ENCODE measurements at regions of chr6 and their contacts with region 1.

Region 1: GRCh38 chr6:110179401-110180227 is at the start of gene WASF1:
- DNase-seq: peak; percentile 86
- H3K4me3 Mint-ChIP-seq: peak within 1 kb of the TSS; percentile 79
- H3K27ac Mint-ChIP-seq: peak within 1 kb of the TSS; percentile 35
- H3K4me1 Mint-ChIP-seq: peaks cover 10% of the 10 kb centered on the region
- H3K27me3 Mint-ChIP-seq: peaks cover 15% of the 10 kb centered on the region
- total RNA-seq, gene WASF1: 2.0 and 2.3 TPM in 2 replicates

Region 2: DNA sequence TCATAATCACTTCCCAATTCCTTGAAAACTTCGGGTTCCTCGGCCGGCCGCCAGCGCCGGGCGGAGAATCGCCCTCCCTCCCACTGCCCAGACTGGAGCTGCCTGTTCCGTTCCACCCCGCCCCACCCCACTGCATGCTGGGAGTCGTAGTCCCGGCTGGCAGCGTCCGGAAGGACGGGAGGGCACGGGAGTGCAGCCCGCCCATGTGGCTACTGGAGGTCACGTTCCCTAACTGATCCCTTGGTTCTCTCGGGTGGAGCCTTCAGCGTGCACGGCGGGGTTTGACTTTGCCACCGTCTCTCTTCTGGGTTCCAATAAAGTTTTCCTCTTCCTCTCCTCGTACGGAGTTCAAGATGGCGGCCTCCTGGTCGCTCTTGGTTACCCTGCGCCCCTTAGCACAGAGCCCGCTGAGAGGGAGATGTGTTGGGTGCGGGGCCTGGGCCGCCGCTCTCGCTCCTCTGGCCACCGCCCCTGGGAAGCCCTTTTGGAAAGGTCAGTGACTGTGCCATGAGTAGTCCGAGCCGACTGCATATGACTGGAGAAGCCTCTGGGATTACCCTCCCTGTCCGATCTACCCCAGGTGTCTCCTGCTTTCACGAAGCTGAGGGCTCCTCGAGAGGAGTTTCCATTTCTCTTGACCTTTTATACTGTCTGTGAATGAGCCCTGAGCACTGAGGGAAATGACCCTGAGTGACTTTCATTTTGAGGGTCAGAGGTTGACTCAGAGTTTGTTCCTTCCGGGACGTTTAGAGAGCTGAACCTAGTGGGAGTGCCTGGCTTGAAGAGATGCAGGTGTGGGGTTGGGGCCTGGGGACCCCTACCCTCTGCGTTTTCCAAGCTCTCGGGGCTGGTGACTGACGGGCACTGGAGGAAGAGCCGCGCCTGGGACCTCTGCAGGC is 1884.6 kb before region 1 on chr6 and contains the start of gene AFG1L:
- intact Hi-C with region 1: loop called (anchors 10 kb)
- DNase-seq: peak; percentile 82
- H3K4me3 Mint-ChIP-seq: peak within 1 kb of the TSS; percentile 100
- H3K27ac Mint-ChIP-seq: peak within 1 kb of the TSS; percentile 100
- H3K4me1 Mint-ChIP-seq: peaks cover 26% of the 10 kb centered on the region
- H3K27me3 Mint-ChIP-seq: peaks cover 2% of the 10 kb centered on the region
- total RNA-seq, gene AFG1L: 4.3 and 6.0 TPM in 2 replicates

Region 3: GRCh38 chr6:109455502-109456282 is 723.9 kb before region 1 on chr6 and contains the start of gene MICAL1:
- intact Hi-C with region 1: loop called (anchors 10 kb)
- DNase-seq: peak; percentile 69
- H3K4me3 Mint-ChIP-seq: peak within 1 kb of the TSS; percentile 97
- H3K27ac Mint-ChIP-seq: peak within 1 kb of the TSS; percentile 97
- H3K4me1 Mint-ChIP-seq: peaks cover 59% of the 10 kb centered on the region
- H3K27me3 Mint-ChIP-seq: no peaks in the 10 kb centered on the region
- total RNA-seq, gene MICAL1: 40.8 and 47.1 TPM in 2 replicates

Region 4: GRCh38 chr6:109690737-109691621 is 488.6 kb before region 1 on chr6 and contains the starts of genes AK9 and FIG4:
- intact Hi-C with region 1: loop called (anchors 1 kb)
- DNase-seq: peak; percentile 85
- H3K4me3 Mint-ChIP-seq: peak within 1 kb of the TSS; percentile 87
- H3K27ac Mint-ChIP-seq: peak within 1 kb of the TSS; percentile 84
- H3K4me1 Mint-ChIP-seq: peaks cover 47% of the 10 kb centered on the region
- H3K27me3 Mint-ChIP-seq: peaks cover 13% of the 10 kb centered on the region
- total RNA-seq, gene AK9: 2.8 and 3.8 TPM in 2 replicates
- total RNA-seq, gene FIG4: 7.5 and 8.1 TPM in 2 replicates

Region 5: GRCh38 chr6:110039364-110039980 is 140.1 kb before region 1 on chr6:
- intact Hi-C with region 1: loop called (anchors 1 kb)
- DNase-seq: peak; percentile 73
- H3K4me3 Mint-ChIP-seq: peak overlapping the region; percentile 83
- H3K27ac Mint-ChIP-seq: peak overlapping the region; percentile 59
- H3K4me1 Mint-ChIP-seq: peaks cover 19% of the 10 kb centered on the region
- H3K27me3 Mint-ChIP-seq: peaks cover 2% of the 10 kb centered on the region

Region 6: GRCh38 chr6:110389689-110390382 is 210.2 kb after region 1 on chr6:
- intact Hi-C with region 1: loop called (anchors 1 kb)
- DNase-seq: no peak
- H3K4me3 Mint-ChIP-seq: no peak overlapping the region
- H3K27ac Mint-ChIP-seq: no peak overlapping the region
- H3K4me1 Mint-ChIP-seq: peaks cover 10% of the 10 kb centered on the region
- H3K27me3 Mint-ChIP-seq: no peaks in the 10 kb centered on the region

Region 7: DNA sequence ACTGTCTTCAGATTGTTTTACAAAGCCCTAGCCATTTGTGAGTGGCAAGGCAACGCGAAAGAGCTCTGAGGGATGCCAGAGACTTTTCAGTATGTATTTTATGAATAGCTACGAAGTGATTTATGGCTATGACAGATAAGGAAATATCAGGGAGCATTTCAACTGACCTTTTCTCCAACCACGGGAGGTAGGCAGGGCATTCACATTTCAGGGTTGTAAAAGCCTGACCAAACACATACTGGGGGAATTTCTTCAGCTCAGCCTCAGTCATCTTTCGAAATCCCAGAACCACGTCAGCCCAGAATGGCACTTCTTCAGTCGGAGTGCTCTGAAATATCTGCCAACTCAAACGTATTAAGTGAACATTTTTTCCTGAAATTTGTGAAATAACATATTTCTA is 225.0 kb after region 1 on chr6:
- intact Hi-C with region 1: no loop called
- DNase-seq: no peak
- H3K4me3 Mint-ChIP-seq: no peak overlapping the region
- H3K27ac Mint-ChIP-seq: no peak overlapping the region
- H3K4me1 Mint-ChIP-seq: no peaks in the 10 kb centered on the region
- H3K27me3 Mint-ChIP-seq: no peaks in the 10 kb centered on the region

Region 8: DNA sequence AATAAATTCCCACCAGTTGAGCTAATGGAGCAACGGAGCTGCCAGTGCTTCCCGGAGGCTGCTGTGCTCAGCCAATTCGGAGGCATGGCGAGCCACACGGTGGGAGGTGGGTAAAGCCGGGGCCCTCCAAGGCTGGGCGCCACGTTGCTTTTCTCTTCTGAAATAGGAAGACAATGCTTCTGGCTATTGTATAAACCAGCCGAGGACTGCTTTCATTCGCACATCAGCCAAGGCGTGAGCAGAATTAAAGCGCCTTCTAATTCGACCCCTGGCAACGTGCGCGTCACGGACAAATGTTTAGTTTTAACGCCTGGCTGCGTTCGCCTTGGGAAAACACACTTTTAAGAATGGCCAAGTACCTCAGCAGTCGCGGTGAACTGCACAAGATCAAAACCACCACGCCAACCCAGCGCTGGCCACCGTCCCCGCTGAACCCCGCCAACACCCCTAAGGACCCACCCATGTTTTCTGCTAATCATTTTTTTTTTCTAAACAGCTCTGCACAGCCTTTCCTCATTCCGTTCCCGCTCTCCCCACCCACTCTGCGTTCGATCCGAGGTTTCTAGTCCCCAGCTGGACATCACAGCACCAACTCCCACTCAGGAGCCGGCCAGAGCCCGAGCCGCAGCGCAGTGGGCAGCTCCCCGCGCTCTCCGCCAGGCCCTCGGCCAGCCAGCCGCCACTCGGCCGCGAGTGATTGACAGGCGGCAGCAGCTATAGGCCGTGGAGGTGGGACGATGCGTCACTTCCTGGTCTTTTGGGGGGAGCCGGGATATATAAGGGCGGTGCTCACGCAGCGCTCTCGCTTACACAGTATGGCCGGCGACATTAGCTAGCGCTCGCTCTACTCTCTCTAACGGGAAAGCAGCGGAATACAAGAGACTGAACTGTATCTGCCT is 694.6 kb after region 1 on chr6 and contains the start of gene AMD1:
- intact Hi-C with region 1: loop called (anchors 2 kb)
- DNase-seq: peak; percentile 94
- H3K4me3 Mint-ChIP-seq: peak within 1 kb of the TSS; percentile 97
- H3K27ac Mint-ChIP-seq: peak within 1 kb of the TSS; percentile 98
- H3K4me1 Mint-ChIP-seq: peaks cover 37% of the 10 kb centered on the region
- H3K27me3 Mint-ChIP-seq: no peaks in the 10 kb centered on the region
- total RNA-seq, gene AMD1: 101 and 109 TPM in 2 replicates

Measured in activated T-helper 1 cell treated with anti-CD3 and anti-CD28 coated beads, Interleukin-12 subunit alpha, Interleukin-12 subunit beta, Interleukin-2, Interleukin-4 antibody, amounts not matched to agents 30 ng/mL and 10 ng/mL and 1 ng/mL, durations not matched to agents 14 hours and 24 hours and 36 hours (primary cell).